Naive thymus-derived CD4-positive, alpha-beta T cell (primary cell): ENCODE measurements at regions of chr1 and their contacts with region 1.

Region 1: DNA sequence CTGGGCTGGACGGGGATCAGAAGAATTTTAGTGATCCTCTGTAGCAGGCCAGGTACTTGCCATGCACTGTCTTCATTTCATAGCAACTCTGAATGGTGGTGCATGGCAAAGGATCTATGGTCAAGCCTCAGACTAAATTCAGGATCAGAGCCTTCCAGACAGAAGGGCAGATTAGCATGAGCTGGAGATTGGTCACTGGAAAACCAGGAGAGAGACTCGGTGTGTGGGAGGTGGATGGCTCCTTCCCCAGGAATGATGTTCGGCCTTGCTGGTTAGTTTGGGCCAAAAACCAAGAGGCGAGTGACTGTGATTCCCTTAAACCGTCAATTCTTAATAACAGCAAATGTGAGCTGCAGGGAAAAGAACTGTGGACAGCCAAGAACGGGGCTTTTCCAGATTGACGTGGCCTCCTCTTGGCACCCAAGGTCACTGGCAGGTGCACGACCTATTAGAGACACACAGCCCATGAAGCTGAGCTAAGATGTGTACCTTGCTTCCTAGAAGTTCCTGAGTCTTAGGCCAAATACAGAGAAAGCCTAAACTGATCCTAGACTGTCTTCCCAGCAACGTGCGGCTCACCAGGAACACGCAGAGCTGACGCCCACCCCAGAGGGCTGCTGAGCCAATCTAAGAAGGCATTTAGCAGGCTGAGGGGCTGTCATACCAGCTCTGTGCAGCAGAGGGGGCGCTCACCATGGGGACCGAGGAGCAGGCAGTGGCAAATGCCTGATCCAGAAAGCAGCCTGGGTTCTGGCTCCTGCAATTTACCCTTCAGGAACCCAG is 18.5 kb downstream of the ALDH4A1 start:
- DNase-seq: peak; percentile 40 to 70 (median 57)
- ATAC-seq: peak; percentile 85
- H3K4me3 ChIP-seq: no peak overlapping the region
- H3K4me3 Mint-ChIP-seq: no peak overlapping the region
- H3K27ac ChIP-seq: no peak overlapping the region
- H3K27ac Mint-ChIP-seq: no peak overlapping the region
- H3K4me1 ChIP-seq: no peaks in the 10 kb centered on the region
- H3K4me1 Mint-ChIP-seq: no peaks in the 10 kb centered on the region
- H3K27me3 ChIP-seq: no peaks in the 10 kb centered on the region
- H3K27me3 Mint-ChIP-seq: no peaks in the 10 kb centered on the region

Region 2: GRCh38 chr1:18913065-18913835 is 29.4 kb after region 1 on chr1:
- CTCF ChIA-PET with region 1: interaction called, 10 read pairs
- POLR2A ChIA-PET with region 1: no interaction called
- intact Hi-C with region 1: loop called in 1 of 2 experiments (anchors 1 kb)
- DNase-seq: peak; percentile 53 to 80 (median 61)
- ATAC-seq: peak; percentile 85
- H3K4me3 ChIP-seq: no peak overlapping the region
- H3K4me3 Mint-ChIP-seq: no peak overlapping the region
- H3K27ac ChIP-seq: no peak overlapping the region
- H3K27ac Mint-ChIP-seq: peak overlapping the region in 4 of 9 donors; percentile 59 to 84 (median 77)
- H3K4me1 ChIP-seq: peaks cover 0 to 4% of the 10 kb centered on the region in 2 donors
- H3K4me1 Mint-ChIP-seq: peaks cover 2 to 15% (median 9%) of the 10 kb centered on the region in 7 donors
- H3K27me3 ChIP-seq: no peaks in the 10 kb centered on the region
- H3K27me3 Mint-ChIP-seq: no peaks in the 10 kb centered on the region

Region 3: GRCh38 chr1:18938008-18938706 is 54.3 kb after region 1 on chr1:
- CTCF ChIA-PET with region 1: no interaction called
- POLR2A ChIA-PET with region 1: no interaction called
- intact Hi-C with region 1: no loop called
- DNase-seq: no peak
- ATAC-seq: peak; percentile 24
- H3K4me3 ChIP-seq: no peak overlapping the region
- H3K4me3 Mint-ChIP-seq: no peak overlapping the region
- H3K27ac ChIP-seq: no peak overlapping the region
- H3K27ac Mint-ChIP-seq: peak overlapping the region in 4 of 9 donors; percentile 24 to 79 (median 49)
- H3K4me1 ChIP-seq: peaks cover 46% of the 10 kb centered on the region in 2 donors
- H3K4me1 Mint-ChIP-seq: peaks cover 32 to 75% (median 68%) of the 10 kb centered on the region in 7 donors
- H3K27me3 ChIP-seq: no peaks in the 10 kb centered on the region
- H3K27me3 Mint-ChIP-seq: no peaks in the 10 kb centered on the region

Region 4: DNA sequence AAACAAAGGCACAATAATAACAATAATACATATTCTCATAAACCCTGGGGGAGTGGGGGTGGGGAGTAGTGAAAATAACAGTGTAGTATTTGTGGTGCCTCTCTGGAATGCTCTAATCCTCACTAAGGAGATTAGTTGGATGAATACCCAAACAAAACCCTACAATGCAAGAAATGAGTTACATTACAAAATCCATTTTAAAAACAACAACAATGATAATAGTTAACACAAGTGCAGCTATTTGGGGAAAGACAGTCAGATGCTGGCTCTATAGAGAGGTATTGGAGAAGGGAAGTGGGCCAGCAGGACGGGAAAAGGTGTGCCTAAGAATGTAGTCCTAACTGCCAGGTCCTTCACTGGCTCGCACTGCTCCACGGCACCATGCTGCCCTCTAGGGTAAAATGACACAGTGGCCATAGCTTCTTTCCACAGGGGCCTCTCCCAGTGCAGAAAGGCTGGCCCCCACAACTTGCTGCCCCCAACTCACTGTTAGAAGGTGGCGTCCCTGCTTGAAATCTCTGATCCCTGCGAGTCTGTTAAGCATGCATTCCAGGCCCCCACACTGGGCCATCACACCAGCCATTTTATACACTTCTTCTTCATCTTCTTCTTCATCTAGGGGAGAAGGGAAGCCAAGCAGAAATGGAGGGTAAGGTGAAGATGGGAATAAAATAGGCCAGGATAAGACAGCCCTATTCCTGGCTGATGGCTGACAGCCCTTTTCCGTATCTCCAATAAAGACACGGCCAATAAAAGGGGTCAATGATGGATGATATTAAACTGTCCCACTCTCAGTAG is 212.4 kb after region 1 on chr1:
- CTCF ChIA-PET with region 1: interaction called, 11 read pairs
- POLR2A ChIA-PET with region 1: no interaction called
- intact Hi-C with region 1: loop called in 1 of 2 experiments (anchors 1 kb)
- DNase-seq: peak in 5 of 9 donors; percentile 13 to 28 (median 24)
- ATAC-seq: no peak
- H3K4me3 ChIP-seq: no peak overlapping the region
- H3K4me3 Mint-ChIP-seq: no peak overlapping the region
- H3K27ac ChIP-seq: no peak overlapping the region
- H3K27ac Mint-ChIP-seq: peak overlapping the region in 2 of 9 donors; percentile 1 to 32
- H3K4me1 ChIP-seq: no peaks in the 10 kb centered on the region
- H3K4me1 Mint-ChIP-seq: peaks cover 0 to 7% (median 0%) of the 10 kb centered on the region in 7 donors
- H3K27me3 ChIP-seq: no peaks in the 10 kb centered on the region
- H3K27me3 Mint-ChIP-seq: no peaks in the 10 kb centered on the region

Region 5: GRCh38 chr1:19240673-19241538 is 357.1 kb after region 1 on chr1:
- CTCF ChIA-PET with region 1: interaction called, 8 read pairs
- POLR2A ChIA-PET with region 1: no interaction called
- intact Hi-C with region 1: loop called in 1 of 2 experiments (anchors 1 kb)
- DNase-seq: peak; percentile 36 to 79 (median 68)
- ATAC-seq: peak; percentile 100
- H3K4me3 ChIP-seq: no peak overlapping the region
- H3K4me3 Mint-ChIP-seq: no peak overlapping the region
- H3K27ac ChIP-seq: peak overlapping the region; percentile 36
- H3K27ac Mint-ChIP-seq: peak overlapping the region in 5 of 9 donors; percentile 28 to 62 (median 56)
- H3K4me1 ChIP-seq: no peaks in the 10 kb centered on the region
- H3K4me1 Mint-ChIP-seq: peaks cover 0 to 4% (median 0%) of the 10 kb centered on the region in 7 donors
- H3K27me3 ChIP-seq: no peaks in the 10 kb centered on the region
- H3K27me3 Mint-ChIP-seq: no peaks in the 10 kb centered on the region